CD4-positive, alpha-beta memory T cell (primary cell): ENCODE measurements at regions of chr6 and their contacts with region 1.

Region 1: GRCh38 chr6:34248727-34249551 is at the start of gene SMIM29:
- DNase-seq: peak; percentile 96 to 98 (median 97)
- H3K4me3 ChIP-seq: peak within 1 kb of the TSS; percentile 82 to 86
- H3K4me3 Mint-ChIP-seq: peak within 1 kb of the TSS; percentile 91 to 97 (median 96)
- H3K27ac ChIP-seq: peak within 1 kb of the TSS; percentile 90
- H3K27ac Mint-ChIP-seq: peak within 1 kb of the TSS; percentile 91 to 99 (median 98)
- H3K4me1 ChIP-seq: peaks cover 35% of the 10 kb centered on the region
- H3K4me1 Mint-ChIP-seq: peaks cover 16 to 36% (median 25%) of the 10 kb centered on the region in 4 donors
- H3K27me3 ChIP-seq: no peaks in the 10 kb centered on the region
- H3K27me3 Mint-ChIP-seq: no peaks in the 10 kb centered on the region
- total RNA-seq, gene SMIM29: 29.7 to 30.1 TPM

Region 2: DNA sequence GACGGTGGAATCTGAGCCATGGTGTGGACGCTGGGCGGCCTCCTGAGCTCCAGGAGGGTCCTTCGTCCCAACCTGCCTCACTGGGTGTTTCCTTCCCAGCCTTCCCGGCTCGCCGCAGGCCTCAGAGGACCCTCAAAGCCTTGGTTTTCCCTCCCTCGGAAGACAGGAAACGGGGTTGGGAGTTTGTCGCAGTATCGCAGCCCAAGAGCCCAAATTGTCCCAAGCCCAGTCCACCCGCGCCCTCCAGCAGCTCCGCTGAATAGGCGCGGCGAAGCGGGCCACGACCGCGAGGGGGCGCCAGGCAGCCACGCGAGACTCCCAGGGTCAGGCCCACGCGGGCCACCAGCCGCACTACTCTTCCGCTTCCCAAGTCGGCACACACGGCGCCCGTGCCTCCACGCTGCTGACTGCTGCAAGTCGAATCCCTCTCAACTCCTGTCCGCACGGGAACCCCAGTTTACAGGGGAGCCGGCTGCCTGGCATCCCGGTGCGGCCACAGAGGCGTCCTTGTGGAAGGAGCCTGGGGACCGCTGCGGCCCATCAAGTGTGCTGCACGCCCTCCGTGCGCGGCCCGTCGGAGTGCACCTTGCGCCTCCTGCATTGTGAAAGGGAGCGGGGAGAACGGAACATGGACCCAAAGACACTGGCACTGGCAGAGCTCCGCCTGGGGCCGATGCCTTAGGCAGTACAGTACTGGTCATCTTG is 52.7 kb before region 1 on chr6:
- CTCF ChIA-PET with region 1: interaction called, 39 read pairs
- POLR2A ChIA-PET with region 1: interaction called, 24 read pairs
- intact Hi-C with region 1: loop called (anchors 1 kb)
- DNase-seq: peak; percentile 81 to 89 (median 85)
- H3K4me3 ChIP-seq: peak overlapping the region; percentile 47 to 58
- H3K4me3 Mint-ChIP-seq: peak overlapping the region; percentile 79 to 89 (median 85)
- H3K27ac ChIP-seq: peak overlapping the region; percentile 48
- H3K27ac Mint-ChIP-seq: peak overlapping the region in 6 of 7 donors; percentile 42 to 78 (median 56)
- H3K4me1 ChIP-seq: peaks cover 9% of the 10 kb centered on the region
- H3K4me1 Mint-ChIP-seq: peaks cover 2 to 9% (median 5%) of the 10 kb centered on the region in 4 donors
- H3K27me3 ChIP-seq: no peaks in the 10 kb centered on the region
- H3K27me3 Mint-ChIP-seq: no peaks in the 10 kb centered on the region

Region 3: GRCh38 chr6:34207695-34208443 is 41.1 kb before region 1 on chr6:
- CTCF ChIA-PET with region 1: no interaction called
- POLR2A ChIA-PET with region 1: no interaction called
- intact Hi-C with region 1: no loop called
- DNase-seq: no peak
- H3K4me3 ChIP-seq: no peak overlapping the region
- H3K4me3 Mint-ChIP-seq: peak overlapping the region in 2 of 8 donors; percentile 10 to 29
- H3K27ac ChIP-seq: no peak overlapping the region
- H3K27ac Mint-ChIP-seq: peak overlapping the region in 4 of 7 donors; percentile 13 to 79 (median 54)
- H3K4me1 ChIP-seq: peaks cover 8% of the 10 kb centered on the region
- H3K4me1 Mint-ChIP-seq: peaks cover 4 to 12% (median 6%) of the 10 kb centered on the region in 4 donors
- H3K27me3 ChIP-seq: no peaks in the 10 kb centered on the region
- H3K27me3 Mint-ChIP-seq: no peaks in the 10 kb centered on the region

Region 4: GRCh38 chr6:34236131-34236996 is 12.6 kb before region 1 on chr6 and contains the start of gene HMGA1:
- CTCF ChIA-PET with region 1: interaction called, 12 read pairs
- POLR2A ChIA-PET with region 1: interaction called, 96 read pairs
- intact Hi-C with region 1: loop called (anchors 1 kb)
- DNase-seq: peak; percentile 83 to 92 (median 85)
- H3K4me3 ChIP-seq: peak within 1 kb of the TSS; percentile 57 to 79
- H3K4me3 Mint-ChIP-seq: peak within 1 kb of the TSS; percentile 91 to 99 (median 94)
- H3K27ac ChIP-seq: peak within 1 kb of the TSS; percentile 97
- H3K27ac Mint-ChIP-seq: peak within 1 kb of the TSS; percentile 97 to 100 (median 99)
- H3K4me1 ChIP-seq: peaks cover 28% of the 10 kb centered on the region
- H3K4me1 Mint-ChIP-seq: peaks cover 14 to 48% (median 28%) of the 10 kb centered on the region in 4 donors
- H3K27me3 ChIP-seq: no peaks in the 10 kb centered on the region
- H3K27me3 Mint-ChIP-seq: no peaks in the 10 kb centered on the region
- total RNA-seq, gene HMGA1: 74.7 to 77.5 TPM

Region 5: DNA sequence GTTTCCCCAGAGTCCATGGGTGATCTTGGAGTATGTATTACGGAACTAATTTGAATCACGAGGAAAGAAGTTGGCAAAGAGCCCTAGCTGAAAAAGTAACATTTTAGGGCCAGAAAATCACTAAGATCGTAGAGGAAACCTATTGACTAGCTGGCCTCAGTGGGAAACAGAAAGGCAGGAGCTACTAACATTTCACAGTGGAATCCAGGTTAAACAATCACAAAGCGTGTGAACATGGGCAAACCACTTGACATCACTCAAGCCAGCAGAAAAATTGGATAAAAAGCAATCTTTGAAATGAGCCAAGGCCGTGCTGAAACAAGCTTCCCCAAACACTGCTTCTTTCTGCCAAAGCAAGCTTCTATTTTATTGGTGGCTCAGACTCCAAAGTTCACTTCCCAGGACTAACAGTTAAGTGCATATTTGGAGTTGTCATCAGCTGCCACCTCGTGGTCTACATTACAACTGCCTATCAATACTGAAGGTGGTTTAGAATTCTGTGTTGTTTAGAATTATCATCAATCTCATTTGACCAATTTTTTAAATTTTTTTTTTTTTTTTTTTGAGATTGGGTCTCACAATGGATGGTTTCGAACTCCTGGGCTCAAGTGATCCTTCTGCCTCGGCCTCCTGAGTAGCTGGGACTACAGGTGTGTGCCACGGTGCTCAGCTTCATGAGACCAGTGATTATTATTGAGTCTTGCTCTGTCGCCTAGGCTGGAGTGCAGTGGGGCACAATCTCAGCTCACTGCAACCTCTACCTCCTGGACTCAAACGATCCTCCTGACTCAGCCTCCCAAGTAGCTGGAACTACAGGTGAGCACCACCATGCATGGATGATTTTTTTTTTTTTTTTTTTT is 166.3 kb after region 1 on chr6:
- CTCF ChIA-PET with region 1: interaction called, 70 read pairs
- POLR2A ChIA-PET with region 1: interaction called, 45 read pairs
- intact Hi-C with region 1: loop called (anchors 1 kb)
- DNase-seq: peak; percentile 50 to 68 (median 51)
- H3K4me3 ChIP-seq: no peak overlapping the region
- H3K4me3 Mint-ChIP-seq: no peak overlapping the region
- H3K27ac ChIP-seq: no peak overlapping the region
- H3K27ac Mint-ChIP-seq: peak overlapping the region in 4 of 7 donors; percentile 2 to 86 (median 16)
- H3K4me1 ChIP-seq: no peaks in the 10 kb centered on the region
- H3K4me1 Mint-ChIP-seq: peaks cover 3 to 19% (median 5%) of the 10 kb centered on the region in 4 donors
- H3K27me3 ChIP-seq: no peaks in the 10 kb centered on the region
- H3K27me3 Mint-ChIP-seq: no peaks in the 10 kb centered on the region

Region 6: GRCh38 chr6:34610819-34611477 is 362.0 kb after region 1 on chr6:
- CTCF ChIA-PET with region 1: interaction called, 21 read pairs
- POLR2A ChIA-PET with region 1: interaction called, 3 read pairs
- intact Hi-C with region 1: loop called (anchors 1 kb)
- DNase-seq: no peak
- H3K4me3 ChIP-seq: no peak overlapping the region
- H3K4me3 Mint-ChIP-seq: no peak overlapping the region
- H3K27ac ChIP-seq: no peak overlapping the region
- H3K27ac Mint-ChIP-seq: peak overlapping the region in 5 of 7 donors; percentile 48 to 74 (median 63)
- H3K4me1 ChIP-seq: peaks cover 8% of the 10 kb centered on the region
- H3K4me1 Mint-ChIP-seq: peaks cover 10 to 23% (median 15%) of the 10 kb centered on the region in 4 donors
- H3K27me3 ChIP-seq: no peaks in the 10 kb centered on the region
- H3K27me3 Mint-ChIP-seq: no peaks in the 10 kb centered on the region